Ascending aorta (tissue), 2 donors: ENCODE measurements at regions of chr1 and their contacts with region 1.

Region 1: DNA sequence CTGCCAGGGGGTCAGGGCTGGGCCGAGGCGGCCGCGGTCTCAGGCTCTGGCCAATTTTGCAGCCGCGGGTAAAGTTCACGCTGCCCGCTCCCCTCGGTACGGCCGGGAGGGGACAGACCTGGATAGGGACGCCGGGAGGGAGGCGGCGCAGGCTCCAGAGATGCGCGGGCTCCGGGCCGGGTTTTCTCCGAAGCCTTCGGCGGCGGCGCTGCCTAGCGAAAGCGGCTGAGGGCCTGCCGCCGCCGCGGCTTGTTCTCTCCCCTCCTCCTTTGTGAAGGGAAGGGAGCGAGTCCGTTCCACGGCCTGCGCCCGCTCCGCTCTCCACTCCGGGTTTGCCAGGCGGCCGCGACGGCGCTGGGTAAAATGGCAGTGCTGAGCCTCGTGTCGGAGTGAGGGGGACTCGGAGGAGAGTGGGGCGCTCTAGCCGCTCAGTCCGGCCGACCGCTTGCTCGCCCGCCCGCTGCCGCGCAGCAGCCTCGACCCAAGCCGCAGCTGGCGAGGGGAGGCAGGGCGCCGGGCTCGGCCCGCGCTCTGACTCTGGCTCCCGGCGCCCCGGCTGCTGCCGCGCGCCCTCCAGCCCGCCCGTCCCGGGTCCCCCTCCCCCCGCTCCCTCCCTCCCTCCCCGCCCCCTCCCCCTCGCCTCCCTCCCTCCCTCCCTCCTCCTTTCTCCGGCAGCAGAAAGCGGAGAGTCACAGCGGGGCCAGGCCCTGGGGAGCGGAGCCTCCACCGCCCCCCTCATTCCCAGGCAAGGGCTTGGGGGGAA is at the start of gene ARID1A:
- DNase-seq: peak; percentile 86 to 98
- H3K4me3 ChIP-seq: peak within 1 kb of the TSS; percentile 96 to 98
- H3K27ac ChIP-seq: peak within 1 kb of the TSS; percentile 90 to 99
- H3K4me1 ChIP-seq: peaks cover 9 to 53% of the 10 kb centered on the region in 2 donors
- H3K27me3 ChIP-seq: no peaks in the 10 kb centered on the region
- CTCF ChIP-seq: peak in 2 of 3 experiments; percentile 15 to 47
- total RNA-seq, gene ARID1A: 104 TPM

Region 2: GRCh38 chr1:26677306-26678115 is 18.0 kb before region 1 on chr1:
- intact Hi-C with region 1: loop called (anchors 2 kb)
- DNase-seq: peak; percentile 36 to 90
- H3K4me3 ChIP-seq: peak overlapping the region; percentile 25 to 47
- H3K27ac ChIP-seq: peak overlapping the region; percentile 40 to 42
- H3K4me1 ChIP-seq: peaks cover 0 to 2% of the 10 kb centered on the region in 2 donors
- H3K27me3 ChIP-seq: no peaks in the 10 kb centered on the region
- CTCF ChIP-seq: peak; percentile 60 to 81 (median 71)

Region 3: GRCh38 chr1:26705788-26706311 is 10.3 kb after region 1 on chr1:
- intact Hi-C with region 1: no loop called
- DNase-seq: no peak
- H3K4me3 ChIP-seq: peak overlapping the region; percentile 3 to 39
- H3K27ac ChIP-seq: peak overlapping the region; percentile 62 to 81
- H3K4me1 ChIP-seq: peaks cover 26 to 81% of the 10 kb centered on the region in 2 donors
- H3K27me3 ChIP-seq: no peaks in the 10 kb centered on the region
- CTCF ChIP-seq: no peak

Region 4: DNA sequence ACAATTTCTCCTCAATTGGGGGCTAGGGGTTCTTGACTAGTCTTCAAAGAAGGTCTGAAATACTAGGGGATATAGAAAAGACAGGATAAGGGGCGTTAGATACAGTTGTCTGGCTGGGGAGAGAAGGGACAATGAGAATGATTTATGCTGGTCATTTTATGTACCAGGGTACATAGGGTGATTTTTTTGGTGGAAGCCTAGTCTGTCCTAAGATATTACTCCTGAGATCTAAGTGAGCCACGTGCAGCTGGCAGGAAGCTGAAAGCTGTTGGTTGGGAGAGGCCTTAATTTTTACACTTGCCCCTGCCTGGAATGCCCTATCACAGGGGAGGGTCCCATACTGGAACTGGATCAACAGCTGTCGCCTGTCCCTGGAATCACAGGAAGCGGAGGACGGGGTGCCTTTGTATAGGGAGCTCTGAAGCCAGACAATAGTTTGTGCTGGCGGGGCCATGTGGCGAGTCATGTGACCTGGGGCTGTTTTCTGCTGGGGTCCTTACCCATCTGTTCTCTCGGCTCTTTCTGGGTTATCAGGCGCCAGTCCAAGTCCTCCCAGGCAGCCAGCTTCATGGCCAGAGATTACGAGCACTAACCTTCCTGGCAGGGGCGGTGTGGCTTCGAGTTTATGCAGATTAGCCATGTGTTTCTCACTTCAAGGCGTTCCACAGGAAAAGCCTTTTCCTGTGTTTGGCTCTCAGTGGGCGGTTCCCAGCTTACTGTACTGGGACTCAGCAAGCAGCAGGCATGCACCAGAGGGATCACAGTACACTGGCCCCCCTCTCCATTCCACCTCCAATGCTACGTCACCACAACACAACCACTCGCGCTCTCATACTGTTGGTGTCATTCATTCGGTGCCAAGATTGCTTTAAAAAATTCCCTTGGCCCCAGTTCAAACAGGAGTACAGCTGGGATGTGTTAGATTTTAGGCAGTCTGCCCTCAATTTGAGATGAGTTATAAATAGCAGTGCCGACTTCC is 27.8 kb after region 1 on chr1:
- intact Hi-C with region 1: loop called (anchors 1 kb)
- DNase-seq: peak; percentile 56 to 92
- H3K4me3 ChIP-seq: peak overlapping the region in 1 of 2 donors; percentile 29
- H3K27ac ChIP-seq: peak overlapping the region; percentile 69 to 70
- H3K4me1 ChIP-seq: peaks cover 15 to 81% of the 10 kb centered on the region in 2 donors
- H3K27me3 ChIP-seq: no peaks in the 10 kb centered on the region
- CTCF ChIP-seq: no peak

Region 5: GRCh38 chr1:26744075-26744959 is 48.8 kb after region 1 on chr1:
- intact Hi-C with region 1: loop called (anchors 2 kb)
- DNase-seq: peak; percentile 87 to 95
- H3K4me3 ChIP-seq: no peak overlapping the region
- H3K27ac ChIP-seq: peak overlapping the region; percentile 57 to 84
- H3K4me1 ChIP-seq: peaks cover 14 to 41% of the 10 kb centered on the region in 2 donors
- H3K27me3 ChIP-seq: no peaks in the 10 kb centered on the region
- CTCF ChIP-seq: no peak

Region 6: GRCh38 chr1:26771643-26772321 is 76.2 kb after region 1 on chr1:
- intact Hi-C with region 1: loop called (anchors 5 kb)
- DNase-seq: peak in 1 of 2 donors; percentile 79
- H3K4me3 ChIP-seq: no peak overlapping the region
- H3K27ac ChIP-seq: peak overlapping the region; percentile 79 to 86
- H3K4me1 ChIP-seq: peaks cover 10 to 36% of the 10 kb centered on the region in 2 donors
- H3K27me3 ChIP-seq: no peaks in the 10 kb centered on the region
- CTCF ChIP-seq: no peak

Region 7: GRCh38 chr1:26782521-26783212 is 87.1 kb after region 1 on chr1:
- intact Hi-C with region 1: no loop called
- DNase-seq: no peak
- H3K4me3 ChIP-seq: no peak overlapping the region
- H3K27ac ChIP-seq: peak overlapping the region; percentile 20 to 26
- H3K4me1 ChIP-seq: peaks cover 9 to 25% of the 10 kb centered on the region in 2 donors
- H3K27me3 ChIP-seq: no peaks in the 10 kb centered on the region
- CTCF ChIP-seq: no peak

Region 8: DNA sequence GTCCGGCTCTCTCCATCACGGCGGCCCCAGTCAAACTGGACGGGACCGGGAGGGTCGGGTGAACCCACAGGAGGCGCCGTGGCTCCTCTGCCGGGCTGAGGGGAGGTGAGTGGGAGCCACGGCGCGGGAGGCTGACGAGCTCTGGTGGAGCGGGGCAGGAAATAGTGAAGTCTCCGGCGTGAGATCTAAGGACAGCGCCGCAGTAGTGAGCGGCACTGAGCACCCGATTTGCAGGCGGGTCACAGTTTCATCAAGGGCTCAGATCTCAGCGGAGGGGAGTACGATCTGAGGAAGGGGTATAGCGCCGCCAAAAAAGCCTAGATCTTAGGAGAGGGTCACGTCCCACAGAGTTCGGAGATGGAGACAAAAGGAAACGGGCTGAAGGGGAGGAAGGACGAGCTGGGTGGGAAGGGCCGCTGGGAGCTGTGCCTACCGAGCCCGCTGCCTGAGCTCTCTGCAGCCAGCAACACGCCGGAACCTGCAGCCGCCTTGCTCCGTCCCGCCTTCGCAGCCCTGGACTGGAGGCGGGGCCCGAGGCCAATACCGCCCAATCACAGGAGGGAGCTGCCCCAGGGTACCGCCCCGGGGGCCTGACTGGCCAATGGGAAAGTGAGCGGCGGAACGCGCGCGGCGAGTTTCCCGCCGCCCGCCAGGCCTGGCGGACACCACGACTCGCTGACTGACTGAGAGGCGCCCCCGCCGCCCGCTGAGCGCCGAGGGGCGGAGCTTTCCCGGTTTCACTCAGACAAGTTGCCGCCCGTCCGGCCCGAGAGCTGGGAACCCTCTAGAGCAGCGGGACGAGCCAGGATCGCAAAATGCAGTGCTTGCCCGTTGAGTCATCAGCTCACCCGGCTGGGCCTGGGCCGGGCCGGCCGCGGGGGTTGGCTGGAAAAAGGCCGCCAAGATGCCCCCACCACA is 169.3 kb after region 1 on chr1:
- intact Hi-C with region 1: loop called (anchors 5 kb)
- DNase-seq: peak; percentile 94 to 99
- H3K4me3 ChIP-seq: peak overlapping the region; percentile 71 to 72
- H3K27ac ChIP-seq: peak overlapping the region; percentile 97
- H3K4me1 ChIP-seq: peaks cover 0 to 13% of the 10 kb centered on the region in 2 donors
- H3K27me3 ChIP-seq: no peaks in the 10 kb centered on the region
- CTCF ChIP-seq: no peak

Region 9: GRCh38 chr1:27010989-27011764 is 315.6 kb after region 1 on chr1:
- intact Hi-C with region 1: no loop called
- DNase-seq: peak; percentile 54 to 89
- H3K4me3 ChIP-seq: peak overlapping the region; percentile 72 to 76
- H3K27ac ChIP-seq: peak overlapping the region; percentile 83 to 94
- H3K4me1 ChIP-seq: peaks cover 16 to 24% of the 10 kb centered on the region in 2 donors
- H3K27me3 ChIP-seq: no peaks in the 10 kb centered on the region
- CTCF ChIP-seq: no peak